Dorsolateral prefrontal cortex (tissue), 120 donors: ENCODE measurements at regions of chr12 and their contacts with region 1.

Region 1: DNA sequence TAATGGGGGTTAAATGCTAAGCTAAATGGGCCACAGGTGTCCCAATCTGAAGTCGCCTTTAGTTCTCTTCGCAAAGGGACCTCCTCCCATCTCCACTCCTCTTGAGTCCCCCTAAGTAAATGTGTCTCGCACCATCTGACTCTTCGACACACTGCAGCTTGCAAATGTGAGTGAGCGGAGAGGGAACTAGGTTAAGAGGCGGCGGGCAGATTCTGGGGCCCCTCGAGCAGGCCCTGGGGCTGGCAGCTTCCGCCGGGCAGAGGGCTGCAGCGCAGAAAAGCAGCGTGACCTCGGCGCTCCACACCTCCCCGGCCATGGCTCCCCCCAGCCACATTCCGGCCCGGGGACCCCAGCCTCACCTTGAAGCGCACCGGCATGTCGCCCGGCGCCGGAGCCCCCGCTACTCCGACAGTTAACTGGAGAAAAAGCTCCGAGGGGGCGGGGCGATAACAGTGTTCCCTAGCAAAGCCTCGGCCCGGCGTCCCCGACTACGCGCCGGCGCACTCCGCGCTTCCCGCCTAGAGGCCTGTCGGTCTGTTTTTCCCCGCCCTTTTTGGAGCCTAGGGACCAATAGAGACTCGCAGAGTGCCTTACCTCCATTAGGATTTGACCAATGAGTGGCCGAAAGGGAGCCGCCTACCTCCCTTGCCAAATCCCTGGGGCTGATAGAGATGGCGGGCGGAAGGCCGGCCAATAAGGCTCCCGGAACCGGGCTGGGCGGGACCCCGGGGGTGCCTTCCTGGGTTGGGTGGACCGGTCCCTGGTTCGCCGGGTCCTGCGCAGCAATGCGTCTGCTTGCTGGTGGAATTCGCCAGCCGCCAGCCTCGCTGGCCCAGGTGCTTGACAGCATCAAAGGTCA is at the start of gene MDM1:
- DNase-seq: peak; percentile 95 to 99 (median 98)
- H3K4me3 ChIP-seq: peak within 1 kb of the TSS; percentile 42 to 97 (median 91)
- H3K27ac ChIP-seq: peak within 1 kb of the TSS in 55 of 59 donors; percentile 3 to 88 (median 71)
- H3K27me3 ChIP-seq: no peaks in the 10 kb centered on the region
- CTCF ChIP-seq: peak in 31 of 56 donors; percentile 6 to 57 (median 23)
- total RNA-seq, gene MDM1: 14.8 to 35.5 (median 23.6) TPM

Region 2: GRCh38 chr12:67268896-67269631 is 1063.0 kb before region 1 on chr12 and contains the start of gene CAND1:
- intact Hi-C with region 1: loop called in 1 of 2 experiments (anchors 5 kb)
- DNase-seq: peak; percentile 96 to 99 (median 98)
- H3K4me3 ChIP-seq: peak within 1 kb of the TSS; percentile 61 to 98 (median 92)
- H3K27ac ChIP-seq: peak within 1 kb of the TSS; percentile 81 to 100 (median 98)
- H3K27me3 ChIP-seq: no peaks in the 10 kb centered on the region
- CTCF ChIP-seq: peak in 39 of 56 donors; percentile 2 to 59 (median 38)
- total RNA-seq, gene CAND1: 92.1 to 204 (median 154) TPM

Region 3: GRCh38 chr12:67355578-67356379 is 976.3 kb before region 1 on chr12:
- intact Hi-C with region 1: loop called in 1 of 2 experiments (anchors 10 kb)
- DNase-seq: no peak
- H3K4me3 ChIP-seq: peak overlapping the region in 4 of 59 donors; percentile 9 to 30 (median 20)
- H3K27ac ChIP-seq: peak overlapping the region in 3 of 59 donors; percentile 8 to 54 (median 30)
- H3K27me3 ChIP-seq: peaks cover 0 to 6% (median 0%) of the 10 kb centered on the region in 45 donors
- CTCF ChIP-seq: peak; percentile 44 to 90 (median 70)

Region 4: DNA sequence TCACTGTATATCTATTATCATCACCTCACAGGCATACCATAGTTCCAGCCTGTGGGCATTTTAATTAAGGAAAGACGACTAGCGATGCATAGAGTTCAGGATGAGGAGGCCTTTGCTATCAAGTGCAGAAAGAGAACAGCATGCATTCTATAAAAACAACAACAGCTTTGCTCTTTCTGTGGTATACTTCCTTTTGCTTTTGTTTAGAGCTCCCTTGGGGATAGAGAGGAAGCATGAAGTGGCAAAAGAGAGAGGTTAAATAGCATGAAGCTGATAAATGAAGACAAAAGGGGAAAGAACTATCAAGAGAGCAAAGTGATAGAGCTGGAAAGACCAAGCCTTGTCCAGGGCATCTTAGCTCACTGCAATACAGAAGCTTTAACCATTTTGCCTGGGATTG is 319.4 kb before region 1 on chr12:
- intact Hi-C with region 1: no loop called
- DNase-seq: no peak
- H3K4me3 ChIP-seq: no peak overlapping the region
- H3K27ac ChIP-seq: no peak overlapping the region
- H3K27me3 ChIP-seq: peaks cover 0 to 2% (median 0%) of the 10 kb centered on the region in 45 donors
- CTCF ChIP-seq: no peak

Region 5: DNA sequence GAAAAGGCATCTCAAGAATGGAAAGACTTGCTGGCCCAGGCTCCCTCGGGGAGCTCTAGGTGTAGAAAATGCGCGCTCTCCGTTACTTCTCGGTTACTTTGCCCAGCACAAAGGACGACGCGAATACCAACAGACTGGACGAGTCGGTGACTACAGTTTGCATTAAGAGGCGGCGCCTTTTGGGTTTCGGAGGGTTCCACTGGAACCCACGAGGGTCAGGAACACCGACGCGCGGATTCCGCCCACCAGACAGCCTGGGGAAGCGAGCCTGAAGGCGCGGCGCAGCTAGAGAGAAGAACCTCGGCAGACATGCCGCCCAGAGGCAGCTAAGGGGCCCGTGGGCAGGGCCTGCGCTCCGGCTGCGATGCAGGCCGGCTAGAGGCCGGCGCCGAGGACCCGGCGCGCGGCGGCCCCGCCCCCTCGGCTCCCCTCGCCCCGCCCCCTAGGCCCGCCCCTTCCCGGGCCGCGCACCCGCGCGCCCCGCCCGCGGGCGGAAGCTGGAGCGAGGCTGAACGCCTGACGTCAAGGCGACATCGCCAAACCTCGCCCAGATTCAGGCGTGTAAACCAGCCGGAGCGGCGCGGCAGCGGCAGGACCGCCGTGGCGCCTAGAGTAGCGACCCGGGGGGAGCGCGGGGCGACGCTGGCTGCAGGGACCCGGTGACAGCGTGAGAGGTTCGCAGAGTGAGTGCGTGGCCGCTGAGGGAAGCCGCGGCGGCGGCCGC is 278.4 kb after region 1 on chr12 and contains the start of gene RAP1B:
- intact Hi-C with region 1: loop called (anchors 2 kb)
- DNase-seq: peak; percentile 77 to 96 (median 90)
- H3K4me3 ChIP-seq: peak within 1 kb of the TSS; percentile 57 to 94 (median 82)
- H3K27ac ChIP-seq: peak within 1 kb of the TSS; percentile 60 to 97 (median 89)
- H3K27me3 ChIP-seq: no peaks in the 10 kb centered on the region
- CTCF ChIP-seq: peak in 16 of 56 donors; percentile 2 to 34 (median 18)
- total RNA-seq, gene RAP1B: 39.9 to 92.7 (median 63.1) TPM

Region 6: GRCh38 chr12:68686595-68687521 is 354.8 kb after region 1 on chr12 and contains the start of gene NUP107:
- intact Hi-C with region 1: loop called (anchors 2 to 10 kb)
- DNase-seq: peak; percentile 92 to 98 (median 94)
- H3K4me3 ChIP-seq: peak within 1 kb of the TSS; percentile 61 to 100 (median 93)
- H3K27ac ChIP-seq: peak within 1 kb of the TSS in 58 of 59 donors; percentile 38 to 93 (median 82)
- H3K27me3 ChIP-seq: no peaks in the 10 kb centered on the region
- CTCF ChIP-seq: peak in 46 of 56 donors; percentile 12 to 57 (median 34)
- total RNA-seq, gene NUP107: 15.0 to 41.1 (median 24.5) TPM